Prostate gland (tissue), 2 donors: ENCODE measurements at regions of chr2 and their contacts with region 1.

Region 1: GRCh38 chr2:99489761-99490622 is at the start of gene REV1:
- DNase-seq: peak; percentile 86
- H3K4me3 ChIP-seq: peak within 1 kb of the TSS; percentile 93 to 99
- H3K27ac ChIP-seq: peak within 1 kb of the TSS; percentile 97 to 99
- H3K4me1 ChIP-seq: peaks cover 5% of the 10 kb centered on the region
- H3K27me3 ChIP-seq: no peaks in the 10 kb centered on the region
- CTCF ChIP-seq: peak; percentile 86 to 97 (median 94)
- POLR2A ChIP-seq: peak; percentile 75
- total RNA-seq, gene REV1: 49.5 to 63.5 TPM

Region 2: GRCh38 chr2:99180755-99181623 is 309.0 kb before region 1 on chr2 and contains the starts of genes MITD1 and MRPL30:
- intact Hi-C with region 1: loop called (anchors 10 kb)
- DNase-seq: peak; percentile 93
- H3K4me3 ChIP-seq: peak within 1 kb of the TSS; percentile 65 to 78
- H3K27ac ChIP-seq: peak within 1 kb of the TSS; percentile 52 to 66
- H3K4me1 ChIP-seq: peaks cover 6% of the 10 kb centered on the region
- H3K27me3 ChIP-seq: no peaks in the 10 kb centered on the region
- CTCF ChIP-seq: peak in 3 of 4 experiments; percentile 1 to 28 (median 25)
- POLR2A ChIP-seq: peak; percentile 59
- total RNA-seq, gene MITD1: 16.0 to 28.7 TPM
- total RNA-seq, gene MRPL30: 24.1 to 37.3 TPM

Region 3: DNA sequence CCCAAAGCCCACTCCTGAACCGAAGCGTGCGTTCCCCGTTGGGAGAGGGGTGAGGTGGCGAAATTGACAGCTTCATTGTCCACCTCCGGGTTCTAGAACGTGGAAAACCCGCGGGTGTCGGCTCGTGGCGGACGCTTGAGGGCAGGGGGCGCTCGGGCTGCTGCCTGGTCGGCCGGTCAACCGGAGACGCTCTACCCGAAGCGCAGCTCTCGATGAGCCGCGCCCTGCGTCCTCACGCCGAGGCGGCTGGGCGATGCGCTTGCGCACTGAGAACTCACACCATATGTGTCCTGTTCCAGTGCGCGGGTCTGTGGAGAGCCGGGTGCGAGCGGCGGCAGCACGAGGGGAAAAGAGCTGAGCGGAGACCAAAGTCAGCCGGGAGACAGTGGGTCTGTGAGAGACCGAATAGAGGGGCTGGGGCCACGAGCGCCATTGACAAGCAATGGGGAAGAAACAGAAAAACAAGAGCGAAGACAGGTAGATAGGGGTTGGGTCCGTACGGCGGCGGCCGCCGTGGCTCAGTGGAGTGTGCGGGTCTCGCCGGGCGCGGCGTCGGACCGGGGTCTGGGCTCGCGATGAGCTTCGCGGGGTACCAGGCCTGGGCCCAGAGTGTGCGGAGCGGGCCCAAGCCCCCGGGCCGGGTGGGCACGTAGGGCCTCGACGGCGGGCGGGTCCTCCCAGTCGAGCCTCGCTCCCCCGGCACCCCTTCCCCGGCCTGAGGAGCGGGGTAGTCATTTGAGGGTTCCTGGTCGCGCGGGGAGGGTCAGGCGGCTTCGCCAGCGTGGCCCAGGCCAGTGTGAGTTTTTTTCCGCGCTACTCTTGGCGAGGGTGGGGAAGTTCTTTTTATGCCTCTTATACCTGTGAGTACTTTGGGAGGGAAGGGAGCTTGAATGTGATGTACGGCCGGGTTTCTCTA is 152.6 kb before region 1 on chr2 and contains the start of gene EIF5B:
- intact Hi-C with region 1: loop called (anchors 1 kb)
- DNase-seq: peak; percentile 96
- H3K4me3 ChIP-seq: peak within 1 kb of the TSS; percentile 45 to 90
- H3K27ac ChIP-seq: peak within 1 kb of the TSS; percentile 84 to 88
- H3K4me1 ChIP-seq: peaks cover 13% of the 10 kb centered on the region
- H3K27me3 ChIP-seq: no peaks in the 10 kb centered on the region
- CTCF ChIP-seq: peak; percentile 43 to 77 (median 76)
- POLR2A ChIP-seq: peak; percentile 64
- total RNA-seq, gene EIF5B: 24.0 to 40.5 TPM

Region 4: DNA sequence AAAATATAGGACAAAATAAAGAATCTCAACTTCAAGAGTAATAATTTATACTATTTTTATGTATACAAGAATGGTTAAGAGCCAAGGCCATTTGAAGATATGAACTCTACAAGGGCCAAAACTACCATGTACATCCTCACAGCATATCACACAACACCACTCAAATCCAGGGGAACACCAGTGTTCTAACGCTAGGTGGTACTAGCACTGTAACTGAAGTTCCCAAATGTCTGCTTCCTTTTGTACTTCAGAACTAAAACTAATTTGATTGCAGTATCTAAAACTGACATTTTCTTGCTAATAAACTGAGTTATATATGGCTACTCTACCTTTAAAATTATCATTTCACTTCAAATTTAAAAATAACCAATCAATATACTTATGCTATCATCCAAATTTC is 47.2 kb before region 1 on chr2:
- intact Hi-C with region 1: loop called (anchors 5 kb)
- DNase-seq: no peak
- H3K4me3 ChIP-seq: no peak overlapping the region
- H3K27ac ChIP-seq: no peak overlapping the region
- H3K4me1 ChIP-seq: no peaks in the 10 kb centered on the region
- H3K27me3 ChIP-seq: no peaks in the 10 kb centered on the region
- CTCF ChIP-seq: peak in 2 of 4 experiments; percentile 30 to 50
- POLR2A ChIP-seq: no peak

Region 5: GRCh38 chr2:99593692-99594427 is 103.9 kb after region 1 on chr2:
- intact Hi-C with region 1: no loop called
- DNase-seq: no peak
- H3K4me3 ChIP-seq: no peak overlapping the region
- H3K27ac ChIP-seq: no peak overlapping the region
- H3K4me1 ChIP-seq: no peaks in the 10 kb centered on the region
- H3K27me3 ChIP-seq: no peaks in the 10 kb centered on the region
- CTCF ChIP-seq: no peak
- POLR2A ChIP-seq: no peak

Region 6: DNA sequence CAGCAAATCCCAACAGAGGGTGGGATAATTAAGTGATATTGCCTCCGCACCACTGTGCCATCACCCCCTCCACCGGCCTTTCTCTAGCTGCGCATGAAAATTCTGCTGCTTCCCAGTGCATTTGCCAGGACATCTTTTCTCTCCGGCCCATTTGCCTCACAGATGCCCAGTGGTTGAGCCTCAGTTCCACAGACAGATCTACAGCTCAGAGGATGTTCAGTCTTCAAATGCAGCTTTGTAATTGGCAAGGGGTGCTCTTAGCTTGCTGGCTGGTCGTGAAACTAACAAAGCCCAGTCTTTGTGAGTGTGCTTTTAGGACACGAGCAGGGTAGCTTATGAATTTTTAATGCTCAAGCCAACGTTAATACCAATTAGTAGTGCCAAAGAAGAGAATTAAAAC is 253.2 kb after region 1 on chr2:
- intact Hi-C with region 1: no loop called
- DNase-seq: no peak
- H3K4me3 ChIP-seq: no peak overlapping the region
- H3K27ac ChIP-seq: no peak overlapping the region
- H3K4me1 ChIP-seq: no peaks in the 10 kb centered on the region
- H3K27me3 ChIP-seq: no peaks in the 10 kb centered on the region
- CTCF ChIP-seq: no peak
- POLR2A ChIP-seq: no peak